ENCODE measurements at regions of chr3 and their contacts with region 1.

Region 1: GRCh38 chr3:98732286-98733052 is 30.7 kb upstream of the ST3GAL6 start:
- DNase-seq: no peak
- ATAC-seq: peak; percentile 52
- H3K4me3 ChIP-seq: peak overlapping the region; percentile 80
- H3K27ac ChIP-seq: peak overlapping the region; percentile 60
- H3K4me1 ChIP-seq: no peaks in the 10 kb centered on the region
- H3K27me3 ChIP-seq: no peaks in the 10 kb centered on the region
- CTCF ChIP-seq: no peak
- EP300 ChIP-seq: no peak
- POLR2A ChIP-seq: peak; percentile 81
- RAD21 ChIP-seq: no peak

Region 2: GRCh38 chr3:97991293-97991682 is 741.2 kb before region 1 on chr3:
- CTCF ChIA-PET with region 1: no interaction called
- POLR2A ChIA-PET with region 1: no interaction called
- RAD21 ChIA-PET with region 1: no interaction called
- SMC1A ChIA-PET with region 1: no interaction called
- in situ Hi-C with region 1: no loop called
- intact Hi-C with region 1: no loop called
- DNase-seq: no peak
- ATAC-seq: no peak
- H3K4me3 ChIP-seq: no peak overlapping the region
- H3K27ac ChIP-seq: no peak overlapping the region
- H3K4me1 ChIP-seq: 0 out of 2 replicates have a peak, but pooled peaks cover 5% of the 10 kb centered on the region
- H3K27me3 ChIP-seq: no peaks in the 10 kb centered on the region
- CTCF ChIP-seq: no peak
- EP300 ChIP-seq: no peak
- POLR2A ChIP-seq: no peak
- RAD21 ChIP-seq: no peak

Region 3: DNA sequence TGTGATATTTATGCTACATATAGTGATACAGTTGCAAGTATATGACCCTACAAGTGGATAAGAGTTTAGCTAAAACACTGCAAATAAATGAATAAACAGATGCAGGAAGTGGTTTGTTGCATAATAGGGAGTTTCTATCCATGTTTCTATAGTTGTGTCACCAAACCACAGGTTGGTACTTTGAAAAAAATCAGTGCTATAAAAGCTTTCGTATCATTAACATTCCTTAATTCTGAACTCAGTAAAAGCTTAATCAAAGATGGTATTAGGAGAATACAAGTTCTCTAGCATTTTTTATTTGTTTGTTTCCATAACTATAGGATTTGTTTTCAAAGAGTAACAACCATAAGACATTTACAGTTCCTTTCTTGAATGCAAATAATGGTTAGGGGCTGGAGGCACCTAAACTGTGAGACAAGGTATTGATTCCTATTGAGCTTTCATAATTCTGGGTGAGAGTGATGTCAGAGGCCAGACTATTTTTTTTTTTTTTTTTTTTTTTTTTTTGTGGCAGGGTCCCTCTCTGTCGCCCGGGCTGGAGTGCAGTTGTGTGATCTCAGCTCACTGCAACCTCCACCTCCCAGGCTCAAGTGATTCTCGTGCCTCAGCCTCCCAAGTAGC is 168.7 kb before region 1 on chr3:
- CTCF ChIA-PET with region 1: no interaction called
- POLR2A ChIA-PET with region 1: interaction called, 4 read pairs
- RAD21 ChIA-PET with region 1: interaction called, 6 read pairs
- SMC1A ChIA-PET with region 1: interaction called, 4 read pairs
- in situ Hi-C with region 1: no loop called
- intact Hi-C with region 1: loop called (anchors 2 kb)
- DNase-seq: no peak
- ATAC-seq: peak; percentile 40
- H3K4me3 ChIP-seq: peak overlapping the region; percentile 57
- H3K27ac ChIP-seq: peak overlapping the region; percentile 100
- H3K4me1 ChIP-seq: peaks cover 46% of the 10 kb centered on the region
- H3K27me3 ChIP-seq: no peaks in the 10 kb centered on the region
- CTCF ChIP-seq: no peak
- EP300 ChIP-seq: peak; percentile 92 to 94
- POLR2A ChIP-seq: no peak; the same call in 1 of the 2 replicates
- RAD21 ChIP-seq: no peak

Region 4: DNA sequence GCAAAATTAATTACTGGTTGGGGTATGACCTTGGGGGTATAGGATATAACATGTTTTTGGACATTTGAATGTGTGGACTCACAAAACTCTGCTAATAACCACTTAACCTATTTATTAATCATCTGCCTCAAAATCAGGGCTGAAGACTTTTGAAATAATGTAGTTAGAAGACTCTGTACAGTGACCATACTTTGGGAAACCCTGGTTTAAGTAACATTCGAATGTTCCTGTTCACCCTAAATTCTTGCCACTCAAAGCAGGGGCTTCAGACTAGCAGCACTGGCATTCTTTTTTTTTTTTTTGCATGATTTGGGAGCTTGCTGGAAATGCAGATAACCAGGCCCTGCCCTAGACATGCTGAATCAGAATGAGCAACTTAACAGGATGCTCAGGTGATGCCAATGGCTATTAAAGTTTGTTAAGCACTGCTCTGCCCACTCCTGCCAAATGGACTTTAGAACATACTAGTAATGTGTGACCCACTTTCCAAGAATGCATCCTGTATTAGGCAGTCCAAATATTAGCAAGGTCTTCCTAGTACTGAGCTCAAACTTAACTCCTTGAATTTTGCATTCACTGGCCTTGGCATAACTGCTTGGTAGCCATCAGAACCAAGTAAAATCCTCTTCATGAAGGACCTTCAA is 17.9 kb after region 1 on chr3:
- CTCF ChIA-PET with region 1: interaction called, 6 read pairs
- POLR2A ChIA-PET with region 1: interaction called, 43 read pairs
- RAD21 ChIA-PET with region 1: interaction called, 36 read pairs
- SMC1A ChIA-PET with region 1: interaction called, 51 read pairs
- in situ Hi-C with region 1: no loop called
- intact Hi-C with region 1: no loop called
- DNase-seq: no peak
- ATAC-seq: peak; percentile 39
- H3K4me3 ChIP-seq: no peak overlapping the region
- H3K27ac ChIP-seq: no peak overlapping the region
- H3K4me1 ChIP-seq: peaks cover 3% of the 10 kb centered on the region; the same call in 1 of the 2 replicates
- H3K27me3 ChIP-seq: no peaks in the 10 kb centered on the region
- CTCF ChIP-seq: no peak
- EP300 ChIP-seq: no peak
- POLR2A ChIP-seq: no peak
- RAD21 ChIP-seq: no peak

Region 5: DNA sequence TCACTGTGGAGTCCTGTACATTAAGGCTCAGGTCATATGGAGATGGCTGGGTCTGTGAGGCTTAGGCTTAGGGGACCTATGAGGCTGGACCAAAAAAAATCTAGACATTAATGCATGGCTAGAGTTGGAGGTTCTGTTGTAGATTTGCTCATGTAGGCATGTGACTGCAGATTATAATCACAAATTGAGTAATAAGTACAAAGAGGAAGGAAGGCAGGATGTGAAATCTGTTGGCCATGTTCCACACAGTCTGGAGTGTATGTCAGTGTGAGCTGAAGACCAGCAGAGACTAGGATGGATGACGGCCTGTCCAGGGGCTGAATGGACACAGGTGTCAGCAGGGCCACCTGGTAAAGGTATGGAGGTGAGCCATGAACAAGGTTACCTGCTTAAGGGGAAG is 30.6 kb after region 1 on chr3 and contains the start of gene ST3GAL6:
- CTCF ChIA-PET with region 1: interaction called, 4 read pairs
- POLR2A ChIA-PET with region 1: interaction called, 9 read pairs
- RAD21 ChIA-PET with region 1: interaction called, 28 read pairs
- SMC1A ChIA-PET with region 1: interaction called, 19 read pairs
- in situ Hi-C with region 1: no loop called
- intact Hi-C with region 1: no loop called
- DNase-seq: no peak
- ATAC-seq: peak; percentile 67
- H3K4me3 ChIP-seq: peak within 1 kb of the TSS; percentile 35; the same call in 1 of the 2 replicates
- H3K27ac ChIP-seq: peak within 1 kb of the TSS; percentile 5; the same call in 1 of the 2 replicates
- H3K4me1 ChIP-seq: peaks cover 29% of the 10 kb centered on the region
- H3K27me3 ChIP-seq: no peaks in the 10 kb centered on the region
- CTCF ChIP-seq: no peak
- EP300 ChIP-seq: no peak
- POLR2A ChIP-seq: 0 out of 2 replicates have a peak, but pooled peaks have one; percentile 34
- RAD21 ChIP-seq: no peak
- polyA plus RNA-seq, gene ST3GAL6: 19.5 to 31.4 TPM

Region 6: DNA sequence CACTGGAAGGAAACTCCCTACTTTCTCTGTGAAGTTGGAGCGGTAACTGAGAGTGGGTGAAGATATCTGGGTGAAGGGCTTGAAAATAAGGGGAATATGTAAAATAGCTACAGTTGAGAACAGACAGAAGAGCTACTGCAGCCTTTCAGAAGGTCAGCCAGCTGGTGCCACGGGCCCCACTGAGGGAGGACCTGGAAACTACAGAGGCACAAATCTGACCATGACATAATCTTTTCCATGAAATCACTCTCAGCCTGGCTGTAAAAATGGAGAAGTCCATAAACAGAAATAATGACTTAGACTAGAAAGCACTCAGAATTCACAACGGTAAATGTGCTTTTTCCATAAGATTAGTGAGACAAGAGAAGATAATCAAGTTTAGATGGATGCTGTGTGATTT is 77.1 kb after region 1 on chr3:
- CTCF ChIA-PET with region 1: interaction called, 3 read pairs
- POLR2A ChIA-PET with region 1: no interaction called
- RAD21 ChIA-PET with region 1: interaction called, 4 read pairs
- SMC1A ChIA-PET with region 1: interaction called, 10 read pairs
- in situ Hi-C with region 1: no loop called
- intact Hi-C with region 1: loop called (anchors 2 kb)
- DNase-seq: no peak
- ATAC-seq: peak; percentile 72
- H3K4me3 ChIP-seq: no peak overlapping the region
- H3K27ac ChIP-seq: no peak overlapping the region
- H3K4me1 ChIP-seq: no peaks in the 10 kb centered on the region
- H3K27me3 ChIP-seq: no peaks in the 10 kb centered on the region
- CTCF ChIP-seq: no peak
- EP300 ChIP-seq: no peak
- POLR2A ChIP-seq: no peak
- RAD21 ChIP-seq: no peak

Measured in GM12878 (cell line).